ENCODE measurements at regions of chr16 and their contacts with region 1.

Region 1: GRCh38 chr16:14111713-14112540 is 40.8 kb downstream of the MRTFB start:
- DNase-seq: no peak
- H3K4me3 Mint-ChIP-seq: no peak overlapping the region
- H3K27ac Mint-ChIP-seq: no peak overlapping the region
- H3K4me1 Mint-ChIP-seq: peaks cover 2% of the 10 kb centered on the region
- H3K27me3 Mint-ChIP-seq: no peaks in the 10 kb centered on the region

Region 2: GRCh38 chr16:14050297-14051036 is 61.5 kb before region 1 on chr16:
- intact Hi-C with region 1: loop called (anchors 2 kb)
- DNase-seq: no peak
- H3K4me3 Mint-ChIP-seq: no peak overlapping the region
- H3K27ac Mint-ChIP-seq: no peak overlapping the region
- H3K4me1 Mint-ChIP-seq: no peaks in the 10 kb centered on the region
- H3K27me3 Mint-ChIP-seq: peaks cover 1% of the 10 kb centered on the region

Region 3: GRCh38 chr16:14063618-14064581 is 48.0 kb before region 1 on chr16:
- intact Hi-C with region 1: no loop called
- DNase-seq: no peak
- H3K4me3 Mint-ChIP-seq: no peak overlapping the region
- H3K27ac Mint-ChIP-seq: no peak overlapping the region
- H3K4me1 Mint-ChIP-seq: no peaks in the 10 kb centered on the region
- H3K27me3 Mint-ChIP-seq: no peaks in the 10 kb centered on the region

Region 4: DNA sequence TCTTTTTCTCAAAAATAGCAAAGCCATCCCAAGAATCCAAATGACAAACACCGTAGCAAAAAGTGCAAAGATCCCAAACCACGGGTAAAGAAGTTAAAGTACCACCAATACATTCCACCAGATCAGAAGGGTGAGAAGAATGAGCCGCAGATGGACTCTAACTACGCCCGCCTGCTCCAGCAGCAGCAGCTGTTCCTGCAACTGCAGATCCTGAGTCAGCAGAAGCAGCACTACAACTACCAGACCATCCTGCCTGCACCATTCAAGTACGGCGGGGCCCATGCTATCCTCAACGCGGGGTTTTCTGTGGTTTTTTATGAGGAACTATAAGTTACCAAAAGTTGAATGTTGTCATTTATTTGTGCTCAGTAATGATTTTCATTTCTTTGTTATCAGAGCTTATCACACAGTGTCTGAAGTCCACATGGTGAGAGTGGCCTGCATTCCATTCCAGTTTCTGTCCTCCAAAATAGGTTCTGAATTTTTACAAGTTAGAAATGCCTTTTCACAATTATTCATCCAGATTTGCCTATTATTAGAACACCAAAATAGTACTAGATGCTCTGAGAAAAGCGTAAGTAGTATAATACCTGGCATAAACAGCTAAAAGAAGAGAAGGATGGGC is 128.4 kb after region 1 on chr16:
- intact Hi-C with region 1: no loop called
- DNase-seq: no peak
- H3K4me3 Mint-ChIP-seq: no peak overlapping the region
- H3K27ac Mint-ChIP-seq: no peak overlapping the region
- H3K4me1 Mint-ChIP-seq: peaks cover 1% of the 10 kb centered on the region
- H3K27me3 Mint-ChIP-seq: no peaks in the 10 kb centered on the region

Measured in activated T-helper 2 cell treated with anti-CD3 and anti-CD28 coated beads, Interferon-gamma antibody, Interleukin-2, Interleukin-4, amounts not matched to agents 10 μg/mL and 5 μg/mL and 100 μg/mL, durations not matched to agents 14 hours and 24 hours and 36 hours (primary cell).